GM23248 (cell line): ENCODE measurements at regions of chr17 and their contacts with region 1.

Region 1: DNA sequence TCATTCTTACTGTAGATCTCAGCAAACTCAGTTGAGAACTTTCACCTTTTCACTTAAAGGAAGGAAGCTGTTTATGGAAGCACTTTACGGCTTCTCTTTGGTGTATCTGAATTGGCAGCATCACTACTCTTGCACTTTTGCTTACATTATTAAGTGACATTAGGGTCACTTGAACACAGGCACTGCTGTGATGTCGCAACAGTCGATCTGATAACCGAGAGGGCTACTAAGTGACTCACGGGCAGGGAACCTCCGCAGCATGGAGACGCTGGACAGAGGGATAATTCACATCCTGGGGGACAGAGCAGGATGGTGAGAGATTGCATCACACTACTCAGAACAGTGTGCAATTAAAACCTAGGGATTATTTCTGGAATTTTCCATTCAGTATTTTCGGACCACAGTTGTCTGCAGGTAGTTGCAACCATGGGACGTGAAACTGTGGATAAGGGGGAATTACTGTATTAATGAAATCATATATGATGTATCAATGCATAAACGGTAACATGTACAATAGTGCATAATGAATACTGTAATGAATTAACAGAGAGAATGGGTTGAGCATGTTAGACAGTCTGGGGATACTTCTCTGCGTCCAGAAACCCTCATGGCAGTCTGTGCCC is 56.6 kb downstream of the DNAH2 start:
- DNase-seq: peak; percentile 68
- H3K4me3 ChIP-seq: no peak overlapping the region
- H3K27ac ChIP-seq: no peak overlapping the region
- H3K4me1 ChIP-seq: peaks cover 8% of the 10 kb centered on the region
- H3K27me3 ChIP-seq: no peaks in the 10 kb centered on the region; the same call in 1 of the 2 replicates

Region 2: GRCh38 chr17:7394452-7395191 is 379.5 kb before region 1 on chr17 and contains the start of gene PLSCR3:
- in situ Hi-C with region 1: no loop called
- DNase-seq: peak; percentile 94
- H3K4me3 ChIP-seq: peak within 1 kb of the TSS; percentile 91
- H3K27ac ChIP-seq: peak within 1 kb of the TSS; percentile 92
- H3K4me1 ChIP-seq: peaks cover 4% of the 10 kb centered on the region; the same call in 1 of the 2 replicates
- H3K27me3 ChIP-seq: no peaks in the 10 kb centered on the region
- total RNA-seq, gene PLSCR3: 72.8 and 73.9 TPM in 2 replicates

Region 3: GRCh38 chr17:7834962-7835813 is 61.0 kb after region 1 on chr17:
- in situ Hi-C with region 1: loop called (anchors 10 kb)
- DNase-seq: peak; percentile 98
- H3K4me3 ChIP-seq: peak overlapping the region; percentile 83
- H3K27ac ChIP-seq: peak overlapping the region; percentile 97
- H3K4me1 ChIP-seq: peaks cover 17% of the 10 kb centered on the region
- H3K27me3 ChIP-seq: no peaks in the 10 kb centered on the region

Region 4: DNA sequence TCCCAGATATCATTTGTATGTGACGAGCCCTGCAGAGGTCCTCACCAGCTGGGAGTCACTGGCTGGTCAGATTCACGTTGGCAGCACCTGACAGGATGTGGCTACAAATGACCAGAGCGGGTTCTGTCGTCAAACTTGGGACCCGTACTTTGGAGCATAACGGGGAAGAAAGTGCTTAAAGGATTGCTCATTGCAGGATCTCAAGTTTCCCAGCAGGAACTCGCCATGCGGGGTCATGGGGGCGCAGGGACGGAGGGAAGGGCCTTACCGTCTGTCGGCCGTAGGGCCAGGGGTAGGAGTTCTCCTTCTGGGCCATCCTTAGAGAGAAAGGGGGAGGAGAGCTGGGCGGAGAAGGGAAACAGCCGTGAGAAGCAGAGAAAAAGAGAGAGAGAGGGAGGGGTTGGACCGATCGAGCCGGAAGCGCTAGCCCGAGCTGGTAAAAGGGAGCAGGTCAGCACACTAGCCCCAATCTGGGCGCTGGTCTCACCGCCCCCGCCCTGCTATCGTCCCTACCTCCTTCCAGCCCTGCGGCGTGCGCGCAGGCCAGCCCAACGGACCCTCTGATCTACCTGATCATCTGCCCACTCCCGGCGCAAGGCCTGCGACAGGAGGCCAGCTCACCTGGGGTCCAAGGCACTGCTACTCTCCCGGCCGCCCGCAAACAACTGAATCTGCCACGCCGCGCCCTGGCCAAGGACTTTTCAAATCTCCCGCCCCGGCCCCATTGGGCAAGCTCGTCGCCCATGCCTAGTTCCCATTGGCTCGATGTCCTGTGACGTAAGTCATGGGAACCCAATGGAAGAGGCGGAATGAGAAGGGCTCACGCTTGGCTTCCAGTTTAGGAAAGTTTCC is 436.0 kb after region 1 on chr17 and contains the start of gene AURKB:
- in situ Hi-C with region 1: no loop called
- DNase-seq: peak; percentile 98
- H3K4me3 ChIP-seq: peak within 1 kb of the TSS; percentile 74
- H3K27ac ChIP-seq: peak within 1 kb of the TSS; percentile 81
- H3K4me1 ChIP-seq: no peaks in the 10 kb centered on the region; the same call in 1 of the 2 replicates
- H3K27me3 ChIP-seq: no peaks in the 10 kb centered on the region
- total RNA-seq, gene AURKB: 9.4 and 18.4 TPM in 2 replicates